ENCODE measurements at regions of chr3 and their contacts with region 1.

Region 1: GRCh38 chr3:40309418-40309924 is at the start of gene EIF1B:
- DNase-seq: peak; percentile 100
- total RNA-seq, gene EIF1B: 261 TPM

Region 2: DNA sequence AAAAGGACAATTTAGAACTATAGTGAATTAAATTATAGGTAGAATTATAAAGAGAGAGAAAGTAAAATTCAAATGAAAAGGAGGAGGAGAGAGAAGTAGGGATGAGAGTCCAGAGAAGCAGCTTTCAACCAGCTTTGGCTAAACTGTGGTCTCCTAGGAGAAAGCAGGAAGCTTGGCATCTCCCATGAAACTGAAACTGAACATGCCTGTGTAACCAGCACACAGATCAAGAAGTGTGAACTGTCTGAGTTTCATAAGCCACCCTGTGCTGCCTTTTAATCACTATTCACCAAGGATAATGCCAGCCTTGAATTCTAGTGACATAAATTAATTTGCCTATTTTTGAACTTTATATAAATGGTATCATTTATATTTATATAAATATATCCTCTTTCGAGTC is 371.6 kb before region 1 on chr3:
- intact Hi-C with region 1: no loop called
- DNase-seq: no peak

Region 3: DNA sequence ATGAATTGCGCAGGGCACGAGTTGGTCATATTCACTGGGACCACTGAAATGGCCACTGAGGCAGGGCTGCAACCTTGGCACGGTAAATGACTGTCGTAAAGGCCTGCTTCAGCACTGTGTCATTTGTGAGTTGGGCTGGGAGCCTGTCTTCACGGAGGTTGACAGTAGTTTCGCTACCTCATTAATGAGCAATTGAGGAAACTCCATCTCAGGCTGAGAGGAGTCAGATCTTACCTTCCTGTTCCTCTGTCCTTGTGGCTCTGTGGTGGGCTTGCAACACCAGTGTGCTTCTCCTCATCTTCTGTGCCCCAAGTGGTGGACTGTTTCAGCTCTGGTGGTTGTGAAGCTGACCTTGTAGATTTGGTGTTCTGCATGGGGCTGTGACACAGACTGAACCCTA is 80.1 kb before region 1 on chr3:
- intact Hi-C with region 1: no loop called
- DNase-seq: no peak

Region 4: DNA sequence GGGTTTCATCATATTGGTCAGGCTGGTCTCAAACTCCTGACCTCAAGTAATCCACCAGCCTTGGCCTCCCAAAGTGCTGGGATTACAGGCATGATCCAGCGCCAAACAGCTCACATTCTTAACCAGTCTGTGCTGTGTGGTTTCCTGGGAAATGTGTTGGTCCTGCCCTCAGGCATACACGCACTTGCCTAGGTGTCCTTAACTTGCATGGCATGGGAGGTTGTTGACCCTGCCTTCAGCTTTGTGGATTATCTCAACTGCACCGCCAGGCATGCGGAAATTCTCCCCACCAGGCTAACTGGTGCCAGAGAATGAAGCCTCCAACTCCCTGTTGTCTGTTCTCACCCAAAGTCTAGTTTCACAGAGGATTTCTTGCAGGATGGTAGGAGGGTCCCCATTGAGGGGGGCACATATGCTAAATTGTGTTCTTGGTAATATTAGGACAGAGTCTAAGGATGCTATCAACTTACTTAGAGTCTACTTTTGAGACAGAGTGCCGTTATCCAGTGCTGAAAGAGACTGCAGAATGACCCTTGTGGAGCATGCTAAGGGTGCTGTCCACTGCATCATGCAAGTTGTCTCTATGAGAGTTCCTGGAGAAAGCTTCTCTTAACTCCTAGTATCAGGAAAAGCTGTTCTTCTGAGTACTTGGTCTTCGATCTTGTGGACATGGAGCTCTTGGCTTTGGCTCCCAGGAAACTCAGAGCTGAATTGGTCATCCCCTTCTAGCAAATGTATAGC is 61.6 kb before region 1 on chr3:
- intact Hi-C with region 1: loop called (anchors 2 kb)
- DNase-seq: no peak

Region 5: DNA sequence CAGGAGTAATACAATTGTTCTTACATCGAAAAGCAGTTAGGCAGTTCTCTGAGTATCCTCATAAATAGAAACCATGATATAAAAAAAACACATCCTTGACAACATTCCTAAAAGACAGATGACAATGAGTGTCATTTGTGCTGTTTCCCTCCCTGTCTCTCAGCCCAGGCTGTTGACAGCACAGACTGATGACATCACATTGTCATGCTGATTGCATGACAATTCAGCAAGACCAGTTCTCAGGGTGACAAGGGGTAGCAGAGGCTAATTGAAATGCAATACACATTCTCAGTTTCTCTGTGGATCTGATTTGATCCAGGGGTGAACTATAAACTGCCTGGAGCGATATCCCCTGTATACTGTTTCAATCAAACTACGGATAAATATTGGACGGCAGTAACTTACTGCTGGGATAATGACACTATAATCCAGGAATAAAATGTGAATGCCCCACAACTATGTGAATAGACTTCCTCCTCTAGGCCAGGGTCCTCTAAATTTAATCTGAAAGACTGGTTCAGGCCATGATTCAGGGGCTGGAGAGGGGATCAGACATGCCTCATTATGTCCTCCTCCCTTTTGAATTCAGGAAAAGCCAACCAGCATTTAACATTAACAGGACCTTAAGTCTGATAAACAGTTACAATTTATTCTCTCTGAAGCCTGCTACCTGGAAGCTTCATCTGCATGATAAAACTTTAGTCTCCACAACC is 16.7 kb before region 1 on chr3:
- intact Hi-C with region 1: loop called (anchors 2 kb)
- DNase-seq: no peak

Region 6: DNA sequence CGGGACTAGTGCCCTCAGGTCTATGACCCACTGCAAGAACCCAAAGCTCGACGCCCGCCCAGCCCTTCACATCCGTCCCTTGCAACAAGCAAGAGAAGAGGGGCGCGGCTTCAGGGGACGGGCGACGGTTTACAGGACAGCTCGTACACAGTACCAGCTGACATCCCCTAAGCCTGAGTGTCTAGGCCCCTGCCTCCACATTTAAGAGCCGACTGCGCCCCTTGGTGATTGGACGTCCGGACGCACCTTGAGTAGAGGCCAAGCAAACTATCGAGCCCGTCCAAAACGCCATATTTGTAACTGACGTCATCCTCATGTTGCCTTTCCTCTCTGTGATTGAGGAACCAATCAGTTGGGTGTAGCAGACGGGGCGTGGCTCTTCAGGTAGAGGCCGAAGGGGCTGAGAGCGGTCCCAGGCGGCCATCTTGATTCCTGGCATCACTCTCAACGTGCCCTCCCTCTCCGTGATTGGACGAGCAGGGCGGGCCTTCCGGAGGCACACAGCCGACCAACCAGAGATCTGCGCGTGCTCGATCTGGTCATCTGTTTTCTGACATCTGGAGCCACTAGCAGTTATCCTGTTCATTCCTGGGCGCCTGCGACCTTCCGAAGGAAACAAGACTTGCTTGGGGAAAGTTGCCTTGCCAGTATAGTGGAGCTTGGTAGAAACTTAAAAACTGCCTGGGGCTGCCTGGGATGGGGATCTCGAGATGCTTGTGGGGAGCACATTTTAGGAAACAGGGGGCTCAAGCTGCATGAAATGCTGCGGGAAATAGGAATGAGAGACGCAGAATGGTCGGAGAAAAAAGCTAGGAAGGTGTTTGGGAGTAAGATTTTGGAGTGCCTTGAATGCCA is 143.6 kb after region 1 on chr3:
- intact Hi-C with region 1: loop called (anchors 5 kb)
- DNase-seq: peak; percentile 99